CD4-positive, alpha-beta T cell (primary cell): ENCODE measurements at regions of chr15 and their contacts with region 1.

Region 1: DNA sequence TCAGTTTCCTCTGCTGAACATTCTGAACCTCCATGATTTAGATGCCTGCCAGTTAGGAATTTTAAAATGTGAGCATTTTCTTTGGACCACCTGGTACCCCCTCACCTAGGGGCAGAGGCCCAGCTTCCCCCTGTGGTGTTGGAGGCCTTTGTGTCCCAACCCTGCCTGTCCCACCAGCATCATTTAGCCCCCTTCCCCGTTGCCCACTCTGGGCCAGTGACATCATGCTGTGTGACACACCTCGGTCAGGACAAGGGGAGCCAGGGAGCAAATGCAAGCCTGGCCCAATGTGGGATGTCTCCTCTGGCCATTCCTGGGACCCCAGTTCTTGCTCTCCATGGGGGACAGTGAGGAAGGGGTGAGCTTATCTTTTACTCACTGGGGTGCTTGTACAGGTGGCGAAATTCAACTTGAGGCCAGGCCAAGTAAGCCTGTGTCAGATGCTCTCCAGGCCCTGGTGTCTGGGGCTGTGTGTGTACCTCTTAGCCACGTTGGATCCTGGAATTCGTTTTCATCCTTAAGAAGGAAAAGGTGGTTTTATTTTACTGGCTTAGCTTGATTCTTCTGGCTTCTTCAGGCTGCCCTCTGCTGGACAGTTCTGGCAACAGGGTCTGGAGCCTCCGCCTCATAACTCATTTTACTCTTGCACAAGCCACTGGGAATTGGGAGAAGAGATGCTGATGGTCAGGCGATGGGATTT is 49.7 kb upstream of the MYZAP start:
- DNase-seq: peak in 5 of 14 experiments; percentile 10 to 38 (median 36)
- ATAC-seq: no peak
- H3K4me3 ChIP-seq: no peak overlapping the region
- H3K4me3 Mint-ChIP-seq: no peak overlapping the region
- H3K27ac ChIP-seq: no peak overlapping the region
- H3K27ac Mint-ChIP-seq: no peak overlapping the region
- H3K4me1 ChIP-seq: no peaks in the 10 kb centered on the region
- H3K4me1 Mint-ChIP-seq: no peaks in the 10 kb centered on the region
- H3K27me3 ChIP-seq: no peaks in the 10 kb centered on the region
- H3K27me3 Mint-ChIP-seq: peaks cover 18% of the 10 kb centered on the region
- CTCF ChIP-seq: peak; percentile 58

Region 2: DNA sequence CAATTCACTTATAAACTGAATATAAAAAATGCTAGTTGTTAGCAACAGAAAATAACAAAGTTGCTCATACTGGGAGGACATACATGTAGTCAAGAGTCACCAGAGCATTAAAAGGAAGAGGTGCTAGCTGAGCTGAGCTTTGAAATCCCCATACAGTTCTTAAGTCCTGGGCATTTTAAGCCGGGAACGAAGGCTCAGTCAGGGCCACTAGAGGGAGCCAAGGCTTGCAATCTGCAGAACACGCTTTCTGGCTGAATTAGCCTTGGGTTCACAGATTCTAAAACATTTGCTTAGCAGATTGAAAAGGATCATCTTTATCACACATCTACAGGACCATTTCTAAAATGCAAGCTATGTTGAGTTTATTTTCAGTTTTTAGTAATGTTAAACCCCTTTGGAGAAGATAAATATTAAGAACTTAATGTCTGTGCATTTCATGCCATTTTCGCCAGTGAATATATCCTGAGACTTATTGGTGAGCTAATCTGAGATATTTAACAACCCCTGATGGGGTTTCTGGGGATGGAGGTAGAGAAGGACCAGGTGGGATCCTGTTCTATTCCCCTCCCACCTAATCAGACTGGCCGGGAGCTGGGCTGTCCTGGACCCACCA is 1050.7 kb before region 1 on chr15:
- CTCF ChIA-PET with region 1: no interaction called
- POLR2A ChIA-PET with region 1: no interaction called
- intact Hi-C with region 1: loop called in 1 of 2 experiments (anchors 5 kb)
- DNase-seq: peak; percentile 10 to 71 (median 29)
- ATAC-seq: peak; percentile 48
- H3K4me3 ChIP-seq: no peak overlapping the region
- H3K4me3 Mint-ChIP-seq: no peak overlapping the region
- H3K27ac ChIP-seq: no peak overlapping the region
- H3K27ac Mint-ChIP-seq: no peak overlapping the region
- H3K4me1 ChIP-seq: no peaks in the 10 kb centered on the region
- H3K4me1 Mint-ChIP-seq: no peaks in the 10 kb centered on the region
- H3K27me3 ChIP-seq: peaks cover 0 to 3% of the 10 kb centered on the region in 2 experiments
- H3K27me3 Mint-ChIP-seq: no peaks in the 10 kb centered on the region
- CTCF ChIP-seq: peak; percentile 69

Region 3: DNA sequence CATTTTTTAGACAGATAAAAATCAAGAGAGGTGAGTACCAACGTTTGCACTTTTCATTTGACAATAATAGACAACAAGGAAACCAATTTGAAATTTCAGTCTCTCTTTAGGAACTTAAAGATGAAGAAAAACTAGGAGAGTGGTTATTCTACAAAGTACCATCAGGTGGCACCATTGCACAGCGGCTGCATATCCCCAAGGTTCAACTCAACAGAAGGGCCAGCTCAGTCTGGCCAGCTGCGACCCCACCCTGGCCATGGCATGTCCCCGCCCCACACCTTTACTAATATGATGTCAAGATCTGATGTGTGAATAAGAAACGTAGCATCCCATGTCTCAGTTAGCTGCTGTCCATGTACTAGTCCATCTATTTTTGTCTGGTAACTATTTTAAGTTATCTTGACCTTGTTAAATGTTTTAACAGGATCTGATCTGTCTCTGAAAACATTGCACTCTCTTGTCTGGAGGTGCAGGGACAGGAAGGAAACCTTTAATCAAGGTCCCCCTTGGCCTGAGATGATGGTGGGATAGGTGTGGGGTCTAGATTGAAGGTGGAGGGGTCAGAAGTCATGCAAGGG is 201.2 kb before region 1 on chr15:
- CTCF ChIA-PET with region 1: no interaction called
- POLR2A ChIA-PET with region 1: no interaction called
- intact Hi-C with region 1: loop called in 1 of 2 experiments (anchors 5 kb)
- DNase-seq: peak in 6 of 14 experiments; percentile 10 to 57 (median 39)
- ATAC-seq: no peak
- H3K4me3 ChIP-seq: no peak overlapping the region
- H3K4me3 Mint-ChIP-seq: no peak overlapping the region
- H3K27ac ChIP-seq: no peak overlapping the region
- H3K27ac Mint-ChIP-seq: no peak overlapping the region
- H3K4me1 ChIP-seq: no peaks in the 10 kb centered on the region
- H3K4me1 Mint-ChIP-seq: no peaks in the 10 kb centered on the region
- H3K27me3 ChIP-seq: no peaks in the 10 kb centered on the region
- H3K27me3 Mint-ChIP-seq: no peaks in the 10 kb centered on the region
- CTCF ChIP-seq: peak; percentile 77